ENCODE measurements at regions of chr9 and their contacts with region 1.

Region 1: DNA sequence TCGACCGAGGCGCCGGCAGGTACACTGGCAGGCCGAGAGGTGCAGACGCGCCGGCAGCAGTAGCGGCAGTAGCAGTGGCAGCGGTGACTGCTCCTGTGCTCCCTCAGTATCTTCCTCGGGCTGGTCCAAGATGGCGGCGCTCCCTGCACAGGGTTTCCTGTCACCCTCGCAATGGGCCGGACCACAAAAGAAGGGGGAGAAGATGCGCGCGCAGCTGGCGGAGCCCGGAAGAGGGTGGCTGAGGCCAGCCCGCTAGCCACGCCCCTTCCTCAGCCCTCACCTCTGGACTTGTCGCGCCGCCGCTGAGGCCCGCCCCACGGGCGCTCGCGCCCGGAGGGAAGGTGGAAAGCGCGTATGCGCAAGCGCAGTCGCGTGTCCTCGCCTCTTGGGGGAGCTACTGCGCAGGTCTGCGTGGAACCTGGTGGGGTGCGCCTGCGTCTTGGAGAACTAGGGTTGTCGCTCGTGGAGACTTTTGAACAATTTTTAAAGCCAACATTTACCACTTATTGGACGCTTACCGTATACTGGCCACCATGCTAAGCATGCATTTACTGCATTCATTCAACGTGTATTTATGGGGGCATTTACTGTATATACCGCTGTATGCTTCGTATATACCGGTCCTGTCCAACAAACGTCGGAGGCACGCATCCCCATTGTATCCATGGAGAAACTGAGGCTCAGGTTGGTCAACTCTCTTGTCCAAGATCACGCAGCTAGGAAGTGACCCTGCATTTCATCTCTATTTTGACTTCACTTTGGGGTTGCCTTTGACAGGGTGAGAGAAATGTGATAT is at the start of gene RAB14:
- DNase-seq: peak; percentile 99 to 100 (median 100)
- H3K4me3 ChIP-seq: peak within 1 kb of the TSS; percentile 64 to 89
- H3K4me3 Mint-ChIP-seq: peak within 1 kb of the TSS; percentile 94 to 97 (median 95)
- H3K27ac ChIP-seq: peak within 1 kb of the TSS; percentile 87
- H3K27ac Mint-ChIP-seq: peak within 1 kb of the TSS; percentile 95 to 99 (median 96)
- H3K4me1 ChIP-seq: peaks cover 38% of the 10 kb centered on the region
- H3K4me1 Mint-ChIP-seq: peaks cover 34 to 59% (median 40%) of the 10 kb centered on the region in 4 donors
- H3K27me3 ChIP-seq: no peaks in the 10 kb centered on the region
- H3K27me3 Mint-ChIP-seq: no peaks in the 10 kb centered on the region
- total RNA-seq, gene RAB14: 65.5 to 68.1 TPM

Region 2: DNA sequence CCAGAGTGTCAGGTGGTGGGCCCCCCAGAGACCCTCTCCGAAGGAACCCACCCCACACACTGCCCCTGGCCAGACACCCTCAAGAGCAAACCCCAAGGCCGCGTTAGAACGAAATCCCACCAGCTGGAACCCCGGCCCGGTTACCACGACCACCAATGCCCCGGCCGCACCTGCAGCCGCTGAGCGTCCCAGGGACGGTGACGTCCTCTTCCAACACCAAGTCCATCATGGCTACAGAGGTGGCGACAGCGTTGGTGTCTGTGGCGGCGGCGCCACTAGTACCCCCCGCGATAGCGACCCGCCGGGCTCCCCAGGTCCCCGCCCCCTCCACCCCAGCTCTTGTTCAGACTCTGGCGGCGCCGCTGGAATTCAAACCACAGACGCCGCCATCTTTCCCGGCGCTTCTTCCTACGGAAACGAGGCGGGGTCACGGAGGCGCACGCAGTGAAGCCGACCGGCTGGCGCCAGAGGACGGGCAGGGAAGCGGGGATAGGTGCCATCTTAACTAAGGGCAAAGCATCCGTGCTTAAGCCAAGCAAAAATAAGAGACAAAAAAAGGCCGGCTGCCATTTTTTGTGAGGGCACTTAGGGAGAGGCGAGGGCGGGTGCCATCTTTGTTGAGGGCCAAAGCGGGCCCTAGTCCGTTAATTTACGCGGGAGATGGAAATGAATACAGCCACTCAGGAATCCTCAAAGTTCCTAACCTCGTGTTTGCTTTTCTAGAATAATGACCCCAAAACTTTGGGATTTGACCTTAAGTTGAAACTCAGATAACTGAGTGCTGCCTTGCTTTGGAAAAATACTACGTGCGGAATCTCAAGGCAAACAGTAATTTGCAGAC is 622.0 kb before region 1 on chr9 and contains the start of gene CDK5RAP2:
- CTCF ChIA-PET with region 1: no interaction called
- POLR2A ChIA-PET with region 1: no interaction called
- intact Hi-C with region 1: loop called (anchors 1 kb)
- DNase-seq: peak; percentile 91 to 95 (median 93)
- H3K4me3 ChIP-seq: peak within 1 kb of the TSS; percentile 91 to 97
- H3K4me3 Mint-ChIP-seq: peak within 1 kb of the TSS; percentile 92 to 97 (median 94)
- H3K27ac ChIP-seq: peak within 1 kb of the TSS; percentile 69
- H3K27ac Mint-ChIP-seq: peak within 1 kb of the TSS; percentile 77 to 97 (median 92)
- H3K4me1 ChIP-seq: peaks cover 32% of the 10 kb centered on the region
- H3K4me1 Mint-ChIP-seq: peaks cover 29 to 68% (median 48%) of the 10 kb centered on the region in 4 donors
- H3K27me3 ChIP-seq: no peaks in the 10 kb centered on the region
- H3K27me3 Mint-ChIP-seq: no peaks in the 10 kb centered on the region
- total RNA-seq, gene CDK5RAP2: 88.5 to 102 TPM

Region 3: DNA sequence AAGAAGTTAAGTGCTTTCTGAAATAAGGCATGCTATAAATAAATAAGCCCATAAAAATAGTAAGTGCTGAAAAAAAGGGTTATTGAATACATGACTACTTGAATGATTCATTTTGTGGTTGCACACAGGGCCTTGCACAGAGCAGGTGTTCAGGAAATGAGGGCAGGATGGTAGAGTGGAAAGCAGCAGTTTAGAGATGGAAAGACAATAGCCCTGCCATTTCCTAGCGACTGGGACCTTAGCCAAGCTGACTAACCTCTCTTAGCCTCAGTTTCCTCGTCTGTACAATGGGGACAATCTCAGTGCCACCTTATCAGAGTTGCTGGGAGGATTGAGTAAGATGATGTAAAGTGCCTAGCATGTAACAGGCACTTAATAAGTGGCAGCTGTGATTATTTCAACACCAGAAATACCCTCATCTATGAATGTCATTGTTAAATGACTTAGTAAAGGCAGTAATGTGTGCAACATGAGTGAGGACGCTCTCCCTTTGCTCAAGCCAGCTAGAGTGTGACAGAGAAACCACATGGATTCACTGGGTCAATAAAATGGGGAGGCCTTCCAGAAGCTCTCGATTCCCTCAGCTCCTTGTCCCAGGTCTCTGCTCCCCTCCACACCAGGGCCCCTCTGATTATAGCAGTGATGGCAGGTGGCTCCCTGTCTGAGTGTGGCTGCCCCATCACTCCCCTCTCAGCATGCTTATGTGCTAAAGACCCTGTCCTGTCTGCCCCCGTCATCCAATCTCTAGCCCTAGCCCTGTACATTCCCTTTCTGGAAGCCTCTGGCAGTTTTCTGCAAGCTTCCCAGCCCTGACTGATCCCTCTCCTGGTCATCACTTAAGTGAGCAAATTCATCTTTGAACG is 309.0 kb before region 1 on chr9:
- CTCF ChIA-PET with region 1: no interaction called
- POLR2A ChIA-PET with region 1: interaction called, 4 read pairs
- intact Hi-C with region 1: loop called (anchors 10 kb)
- DNase-seq: peak; percentile 69 to 93 (median 75)
- H3K4me3 ChIP-seq: peak overlapping the region in 1 of 2 donors; percentile 41
- H3K4me3 Mint-ChIP-seq: peak overlapping the region; percentile 8 to 82 (median 68)
- H3K27ac ChIP-seq: peak overlapping the region; percentile 76
- H3K27ac Mint-ChIP-seq: peak overlapping the region; percentile 86 to 100 (median 98)
- H3K4me1 ChIP-seq: peaks cover 95% of the 10 kb centered on the region
- H3K4me1 Mint-ChIP-seq: peaks cover 49 to 92% (median 71%) of the 10 kb centered on the region in 4 donors
- H3K27me3 ChIP-seq: no peaks in the 10 kb centered on the region
- H3K27me3 Mint-ChIP-seq: no peaks in the 10 kb centered on the region

Region 4: DNA sequence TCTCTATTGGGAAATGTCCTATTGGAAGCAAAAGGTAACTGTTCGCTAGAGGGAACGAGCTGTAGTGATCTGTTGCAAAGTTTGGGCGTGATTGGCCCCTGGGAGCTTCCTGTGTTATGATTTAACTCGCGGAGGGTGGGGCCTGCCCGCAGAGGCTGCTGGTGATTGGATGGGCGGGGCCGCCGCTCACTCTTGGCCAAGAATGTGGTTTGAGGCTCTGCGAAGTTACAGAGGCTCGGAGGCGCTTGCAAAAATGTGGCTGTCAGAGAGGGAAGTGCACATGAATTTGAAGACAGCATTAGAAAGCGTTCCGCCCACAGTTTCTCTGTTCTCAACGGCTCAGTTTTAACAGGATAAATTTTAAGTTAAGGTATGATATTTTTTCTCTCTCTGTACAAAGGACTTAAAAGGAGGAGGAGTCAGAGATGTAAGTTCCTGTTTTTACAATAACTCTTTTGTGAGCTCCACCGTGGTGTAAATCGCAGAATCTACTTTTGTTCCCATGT is 80.3 kb before region 1 on chr9:
- CTCF ChIA-PET with region 1: interaction called, 4 read pairs
- POLR2A ChIA-PET with region 1: interaction called, 15 read pairs
- intact Hi-C with region 1: loop called (anchors 1 kb)
- DNase-seq: peak; percentile 94 to 98 (median 96)
- H3K4me3 ChIP-seq: peak overlapping the region; percentile 55 to 67
- H3K4me3 Mint-ChIP-seq: peak overlapping the region; percentile 88 to 94 (median 90)
- H3K27ac ChIP-seq: peak overlapping the region; percentile 67
- H3K27ac Mint-ChIP-seq: peak overlapping the region; percentile 87 to 93 (median 91)
- H3K4me1 ChIP-seq: peaks cover 56% of the 10 kb centered on the region
- H3K4me1 Mint-ChIP-seq: peaks cover 32 to 61% (median 44%) of the 10 kb centered on the region in 4 donors
- H3K27me3 ChIP-seq: no peaks in the 10 kb centered on the region
- H3K27me3 Mint-ChIP-seq: no peaks in the 10 kb centered on the region

Region 5: GRCh38 chr9:121185178-121185745 is 16.7 kb before region 1 on chr9:
- CTCF ChIA-PET with region 1: interaction called, 13 read pairs
- POLR2A ChIA-PET with region 1: interaction called, 12 read pairs
- intact Hi-C with region 1: loop called (anchors 2 kb)
- DNase-seq: no peak
- H3K4me3 ChIP-seq: no peak overlapping the region
- H3K4me3 Mint-ChIP-seq: peak overlapping the region in 4 of 8 donors; percentile 0 to 71 (median 44)
- H3K27ac ChIP-seq: peak overlapping the region; percentile 40
- H3K27ac Mint-ChIP-seq: peak overlapping the region; percentile 50 to 86 (median 80)
- H3K4me1 ChIP-seq: peaks cover 62% of the 10 kb centered on the region
- H3K4me1 Mint-ChIP-seq: peaks cover 48 to 75% (median 57%) of the 10 kb centered on the region in 4 donors
- H3K27me3 ChIP-seq: no peaks in the 10 kb centered on the region
- H3K27me3 Mint-ChIP-seq: no peaks in the 10 kb centered on the region

Region 6: DNA sequence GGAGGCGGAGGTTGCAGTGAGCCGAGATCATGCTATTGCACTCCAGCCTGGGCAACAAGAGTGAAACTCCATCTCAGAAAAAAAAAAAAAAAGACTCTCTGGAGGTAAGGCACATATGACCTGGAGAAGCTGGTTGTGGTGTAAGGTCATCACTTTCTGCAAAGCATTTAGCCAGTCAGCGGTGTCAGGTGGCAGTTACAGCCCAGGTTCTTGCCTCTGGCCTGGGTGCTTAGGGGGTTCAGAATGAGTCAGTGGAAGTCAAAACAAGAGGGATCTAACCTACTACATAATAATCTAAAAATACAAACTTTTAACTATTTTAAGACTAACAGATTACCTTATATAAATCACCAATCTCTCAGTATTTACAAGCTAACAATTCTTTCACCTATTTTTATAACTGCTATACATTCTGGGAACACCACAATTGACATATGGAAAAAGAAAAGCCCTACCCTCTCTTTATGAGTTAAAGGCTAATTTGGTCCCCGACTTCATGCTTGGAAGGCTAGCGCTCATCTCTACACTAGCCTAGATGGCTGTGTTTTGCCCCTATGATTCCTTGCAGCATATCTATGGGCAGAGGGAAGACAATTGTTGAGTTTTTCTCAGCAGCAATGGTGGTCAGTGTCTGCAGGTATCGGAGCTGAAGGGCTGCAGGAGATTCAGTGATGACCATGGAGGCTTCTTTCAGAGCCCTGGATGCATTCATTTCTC is 138.9 kb after region 1 on chr9:
- CTCF ChIA-PET with region 1: no interaction called
- POLR2A ChIA-PET with region 1: no interaction called
- intact Hi-C with region 1: no loop called
- DNase-seq: no peak
- H3K4me3 ChIP-seq: no peak overlapping the region
- H3K4me3 Mint-ChIP-seq: no peak overlapping the region
- H3K27ac ChIP-seq: no peak overlapping the region
- H3K27ac Mint-ChIP-seq: peak overlapping the region in 2 of 7 donors; percentile 39 to 66
- H3K4me1 ChIP-seq: no peaks in the 10 kb centered on the region
- H3K4me1 Mint-ChIP-seq: peaks cover 8 to 25% (median 18%) of the 10 kb centered on the region in 4 donors
- H3K27me3 ChIP-seq: no peaks in the 10 kb centered on the region
- H3K27me3 Mint-ChIP-seq: no peaks in the 10 kb centered on the region

Region 7: GRCh38 chr9:121369595-121370265 is 167.8 kb after region 1 on chr9 and contains the start of gene STOM:
- CTCF ChIA-PET with region 1: interaction called, 3 read pairs
- POLR2A ChIA-PET with region 1: no interaction called
- intact Hi-C with region 1: loop called (anchors 1 kb)
- DNase-seq: peak in 4 of 5 donors; percentile 75 to 86 (median 78)
- H3K4me3 ChIP-seq: peak within 1 kb of the TSS; percentile 72 to 80
- H3K4me3 Mint-ChIP-seq: peak within 1 kb of the TSS; percentile 89 to 98 (median 96)
- H3K27ac ChIP-seq: peak within 1 kb of the TSS; percentile 79
- H3K27ac Mint-ChIP-seq: peak within 1 kb of the TSS; percentile 78 to 99 (median 96)
- H3K4me1 ChIP-seq: peaks cover 50% of the 10 kb centered on the region
- H3K4me1 Mint-ChIP-seq: peaks cover 38 to 74% (median 50%) of the 10 kb centered on the region in 4 donors
- H3K27me3 ChIP-seq: no peaks in the 10 kb centered on the region
- H3K27me3 Mint-ChIP-seq: no peaks in the 10 kb centered on the region
- total RNA-seq, gene STOM: 81.2 to 82.8 TPM